K562 (cell line): ENCODE measurements at regions of chr5 and their contacts with region 1.

Region 1: DNA sequence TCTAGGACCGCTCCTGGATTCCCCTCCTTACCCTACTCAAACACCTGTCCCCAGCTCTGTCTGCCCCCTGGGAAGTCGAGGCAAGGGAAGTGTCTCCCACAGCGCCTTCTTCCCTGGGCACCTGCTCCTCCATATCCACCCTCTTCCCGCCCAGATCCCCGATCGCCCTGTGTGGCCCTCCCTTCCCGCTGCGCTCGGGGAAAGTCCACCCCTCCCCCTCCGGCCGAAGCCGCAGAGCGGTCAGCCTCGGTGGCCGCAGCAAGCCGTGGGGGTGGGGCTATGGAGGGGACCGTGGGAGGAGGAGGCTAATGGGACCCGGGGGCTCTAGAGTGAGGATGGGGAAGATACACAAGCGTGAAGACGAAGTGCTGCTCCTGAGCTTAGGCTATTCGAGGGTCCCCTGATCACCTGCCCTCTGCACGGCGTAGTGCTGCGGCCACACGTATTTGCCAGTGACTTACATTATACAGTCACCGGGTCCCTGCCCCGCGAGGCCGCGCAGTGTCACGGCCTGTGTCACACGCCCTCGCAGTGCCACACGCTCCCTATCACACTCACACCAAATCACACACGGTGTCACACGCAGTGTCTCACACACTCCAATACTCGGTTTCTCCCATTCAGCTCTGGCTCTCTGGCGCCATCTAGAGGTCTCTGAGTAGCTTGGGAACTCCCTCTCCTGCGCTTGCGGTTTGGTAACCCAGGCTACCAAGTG is 658 bp upstream of the PCDH1 start:
- DNase-seq: peak; percentile 73 to 95 (median 74)
- ATAC-seq: peak; percentile 76
- H3K4me3 ChIP-seq: peak overlapping the region; percentile 58
- H3K27ac ChIP-seq: no peak overlapping the region
- H3K4me1 ChIP-seq: peaks cover 37 to 59% of the 10 kb centered on the region in 2 experiments; a peak in 4 of 5 replicates
- H3K27me3 ChIP-seq: peaks cover 26 to 75% of the 10 kb centered on the region in 2 experiments
- CTCF ChIP-seq: peak; percentile 92 to 98 (median 94)
- EP300 ChIP-seq: no peak
- POLR2A ChIP-seq: no peak
- RAD21 ChIP-seq: peak; percentile 84 to 93

Region 2: DNA sequence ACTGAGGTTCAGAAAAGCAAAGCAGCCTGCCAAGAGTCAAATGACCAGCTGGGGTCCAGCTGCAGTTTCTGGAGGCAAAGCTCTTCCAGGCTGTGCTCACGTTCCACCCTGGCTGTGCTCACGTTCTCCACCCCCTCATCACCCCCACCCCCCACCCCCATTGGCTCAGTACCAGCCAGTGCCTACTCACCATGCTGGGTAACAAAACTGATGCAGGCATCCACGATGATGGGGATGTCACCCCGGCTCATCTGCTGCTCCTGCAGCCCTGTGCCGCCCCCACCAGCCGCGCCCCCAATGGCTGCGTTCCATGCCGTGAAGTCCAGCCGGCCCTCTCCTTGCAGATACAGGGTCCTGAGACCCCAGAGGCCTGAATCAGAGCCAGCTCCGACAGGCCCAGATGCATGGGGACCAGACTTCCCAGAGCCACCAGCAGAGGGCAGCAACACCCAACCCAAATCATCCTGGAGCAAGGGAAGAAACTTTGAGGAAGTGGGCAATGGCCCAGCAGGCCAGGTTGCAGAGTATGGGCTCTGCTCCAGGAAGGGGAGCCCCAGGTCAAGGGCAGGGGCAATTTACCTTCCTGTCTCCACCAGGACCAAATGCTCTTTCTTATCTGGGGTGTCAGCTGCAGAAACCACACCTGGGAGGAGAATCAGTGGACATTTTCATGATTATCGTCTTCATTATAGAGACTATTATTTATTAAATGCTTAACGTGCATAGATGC is 214.0 kb before region 1 on chr5:
- CTCF ChIA-PET with region 1: interaction called, 5 read pairs
- POLR2A ChIA-PET with region 1: interaction called, 3 read pairs
- in situ Hi-C with region 1: no loop called
- intact Hi-C with region 1: loop called (anchors 1 kb)
- DNase-seq: peak; percentile 76 to 86 (median 78)
- ATAC-seq: peak; percentile 97
- H3K4me3 ChIP-seq: no peak overlapping the region
- H3K27ac ChIP-seq: no peak overlapping the region
- H3K4me1 ChIP-seq: peaks cover 5 to 6% of the 10 kb centered on the region in 2 experiments; a peak in 4 of 5 replicates
- H3K27me3 ChIP-seq: no peaks in the 10 kb centered on the region
- CTCF ChIP-seq: peak; percentile 90 to 93 (median 91)
- EP300 ChIP-seq: 0 out of 2 replicates have a peak, but pooled peaks have one; percentile 13
- POLR2A ChIP-seq: no peak
- RAD21 ChIP-seq: peak; percentile 88 to 89

Region 3: DNA sequence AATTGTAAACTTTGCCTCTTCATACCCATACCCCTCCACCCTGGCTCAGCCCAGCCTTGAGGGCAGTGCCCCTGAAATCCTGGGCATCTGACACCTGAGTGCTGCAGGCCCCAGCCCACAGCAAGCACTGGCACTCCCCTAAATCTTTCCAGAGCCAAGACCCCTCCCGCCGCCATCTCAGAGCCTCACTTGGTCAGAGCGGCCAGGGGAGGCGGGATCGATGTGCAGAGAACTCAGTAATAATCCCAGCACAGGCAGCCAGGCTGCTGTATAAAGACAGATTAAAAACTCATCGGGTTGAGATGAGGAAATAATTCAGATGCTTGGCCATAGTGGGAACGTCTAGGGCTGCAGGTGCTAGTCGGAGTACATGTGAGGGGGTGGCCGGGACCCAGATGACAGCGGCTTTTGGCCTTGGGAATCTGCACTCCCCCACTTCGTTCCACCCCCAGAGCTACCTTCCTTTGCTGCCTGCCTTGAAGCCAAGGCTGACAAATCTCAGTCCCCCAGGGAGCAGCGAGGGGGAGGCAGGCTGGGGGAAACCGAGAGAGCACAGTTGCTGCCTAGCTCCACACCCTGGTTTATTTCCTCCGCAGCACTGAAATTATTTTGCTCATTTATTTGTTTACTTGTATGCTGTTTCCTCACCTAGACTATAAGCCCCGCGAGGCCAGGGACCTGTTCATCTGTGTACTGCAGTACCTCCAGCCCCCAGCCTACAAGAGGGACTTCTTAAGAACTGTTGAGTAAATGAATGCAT is 177.3 kb before region 1 on chr5:
- CTCF ChIA-PET with region 1: interaction called, 20 read pairs
- POLR2A ChIA-PET with region 1: no interaction called
- in situ Hi-C with region 1: loop called (anchors 5 kb)
- intact Hi-C with region 1: loop called (anchors 1 kb)
- DNase-seq: no peak
- ATAC-seq: peak; percentile 16; the same call in 2 of the 3 replicates
- H3K4me3 ChIP-seq: no peak overlapping the region
- H3K27ac ChIP-seq: no peak overlapping the region
- H3K4me1 ChIP-seq: peaks cover 0 to 9% of the 10 kb centered on the region in 2 experiments; a peak in 3 of 5 replicates
- H3K27me3 ChIP-seq: peaks cover 21 to 62% of the 10 kb centered on the region in 2 experiments
- CTCF ChIP-seq: no peak
- EP300 ChIP-seq: no peak
- POLR2A ChIP-seq: no peak
- RAD21 ChIP-seq: no peak

Region 4: DNA sequence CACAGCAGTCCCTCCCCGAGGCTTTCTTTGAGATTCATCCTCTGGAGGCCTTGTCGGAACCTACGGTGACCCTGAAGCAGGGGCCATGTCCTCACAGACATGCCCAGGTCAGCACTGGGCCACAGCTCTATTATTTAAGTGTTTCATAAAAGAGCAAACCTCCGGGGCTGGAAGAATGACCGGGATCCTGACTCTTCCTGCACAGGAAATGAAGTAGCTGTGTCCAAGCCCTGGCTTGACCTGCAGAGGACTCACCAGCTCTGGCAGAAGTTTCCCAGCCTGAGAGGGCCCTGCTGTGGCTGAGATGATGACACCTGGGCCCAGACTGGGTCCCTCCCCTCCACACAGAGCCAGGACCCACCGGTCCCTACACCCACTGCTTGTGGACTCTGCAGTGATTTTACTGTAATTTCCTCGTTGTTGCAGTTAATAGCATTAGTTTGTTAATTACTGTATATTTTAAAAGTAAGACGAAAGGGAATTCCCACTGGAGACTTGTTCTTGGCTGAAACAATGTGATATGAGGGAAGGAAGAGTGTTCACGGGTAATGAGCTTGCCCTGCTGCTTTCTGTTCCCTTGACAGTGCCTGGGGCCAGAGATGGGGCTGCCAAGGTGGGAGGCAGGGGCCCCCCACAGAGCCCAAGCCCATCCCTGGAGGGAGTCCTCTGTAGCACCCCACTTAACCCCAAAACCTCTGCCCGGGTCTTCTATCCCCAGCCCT is 72.8 kb before region 1 on chr5:
- CTCF ChIA-PET with region 1: no interaction called
- POLR2A ChIA-PET with region 1: no interaction called
- in situ Hi-C with region 1: no loop called
- intact Hi-C with region 1: no loop called
- DNase-seq: no peak
- ATAC-seq: no peak
- H3K4me3 ChIP-seq: no peak overlapping the region
- H3K27ac ChIP-seq: no peak overlapping the region
- H3K4me1 ChIP-seq: no peaks in the 10 kb centered on the region
- H3K27me3 ChIP-seq: peaks cover 24 to 55% of the 10 kb centered on the region in 2 experiments
- CTCF ChIP-seq: no peak
- EP300 ChIP-seq: no peak
- POLR2A ChIP-seq: no peak
- RAD21 ChIP-seq: no peak

Region 5: GRCh38 chr5:141816598-141817372 is 62.1 kb before region 1 on chr5:
- CTCF ChIA-PET with region 1: no interaction called
- POLR2A ChIA-PET with region 1: no interaction called
- in situ Hi-C with region 1: no loop called
- intact Hi-C with region 1: loop called (anchors 2 kb)
- DNase-seq: peak; percentile 39 to 55 (median 50)
- ATAC-seq: peak; percentile 45
- H3K4me3 ChIP-seq: no peak overlapping the region
- H3K27ac ChIP-seq: no peak overlapping the region
- H3K4me1 ChIP-seq: peaks cover 2 to 9% of the 10 kb centered on the region in 2 experiments
- H3K27me3 ChIP-seq: peaks cover 4 to 11% of the 10 kb centered on the region in 2 experiments; a peak in 3 of 5 replicates
- CTCF ChIP-seq: no peak
- EP300 ChIP-seq: no peak
- POLR2A ChIP-seq: no peak
- RAD21 ChIP-seq: no peak

Region 6: GRCh38 chr5:141832131-141832918 is 46.5 kb before region 1 on chr5:
- CTCF ChIA-PET with region 1: no interaction called
- POLR2A ChIA-PET with region 1: no interaction called
- in situ Hi-C with region 1: no loop called
- intact Hi-C with region 1: no loop called
- DNase-seq: no peak
- ATAC-seq: no peak
- H3K4me3 ChIP-seq: no peak overlapping the region
- H3K27ac ChIP-seq: no peak overlapping the region
- H3K4me1 ChIP-seq: peaks cover 3 to 4% of the 10 kb centered on the region in 2 experiments; a peak in 2 of 5 replicates
- H3K27me3 ChIP-seq: peaks cover 14 to 54% of the 10 kb centered on the region in 2 experiments; a peak in 4 of 5 replicates
- CTCF ChIP-seq: no peak
- EP300 ChIP-seq: no peak
- POLR2A ChIP-seq: no peak
- RAD21 ChIP-seq: no peak

Region 7: GRCh38 chr5:141960449-141961202 is 81.8 kb after region 1 on chr5:
- CTCF ChIA-PET with region 1: interaction called, 3 read pairs
- POLR2A ChIA-PET with region 1: no interaction called
- in situ Hi-C with region 1: loop called (anchors 5 kb)
- intact Hi-C with region 1: loop called (anchors 2 kb)
- DNase-seq: peak; percentile 83 to 95 (median 86)
- ATAC-seq: peak; percentile 94
- H3K4me3 ChIP-seq: no peak overlapping the region
- H3K27ac ChIP-seq: peak overlapping the region; percentile 55
- H3K4me1 ChIP-seq: peaks cover 3 to 16% of the 10 kb centered on the region in 2 experiments
- H3K27me3 ChIP-seq: peaks cover 3 to 21% of the 10 kb centered on the region in 2 experiments; a peak in 3 of 5 replicates
- CTCF ChIP-seq: peak; percentile 90 to 95 (median 94)
- EP300 ChIP-seq: no peak
- POLR2A ChIP-seq: no peak
- RAD21 ChIP-seq: peak; percentile 86 to 91